ENCODE measurements at regions of chr10 and their contacts with region 1.

Region 1: DNA sequence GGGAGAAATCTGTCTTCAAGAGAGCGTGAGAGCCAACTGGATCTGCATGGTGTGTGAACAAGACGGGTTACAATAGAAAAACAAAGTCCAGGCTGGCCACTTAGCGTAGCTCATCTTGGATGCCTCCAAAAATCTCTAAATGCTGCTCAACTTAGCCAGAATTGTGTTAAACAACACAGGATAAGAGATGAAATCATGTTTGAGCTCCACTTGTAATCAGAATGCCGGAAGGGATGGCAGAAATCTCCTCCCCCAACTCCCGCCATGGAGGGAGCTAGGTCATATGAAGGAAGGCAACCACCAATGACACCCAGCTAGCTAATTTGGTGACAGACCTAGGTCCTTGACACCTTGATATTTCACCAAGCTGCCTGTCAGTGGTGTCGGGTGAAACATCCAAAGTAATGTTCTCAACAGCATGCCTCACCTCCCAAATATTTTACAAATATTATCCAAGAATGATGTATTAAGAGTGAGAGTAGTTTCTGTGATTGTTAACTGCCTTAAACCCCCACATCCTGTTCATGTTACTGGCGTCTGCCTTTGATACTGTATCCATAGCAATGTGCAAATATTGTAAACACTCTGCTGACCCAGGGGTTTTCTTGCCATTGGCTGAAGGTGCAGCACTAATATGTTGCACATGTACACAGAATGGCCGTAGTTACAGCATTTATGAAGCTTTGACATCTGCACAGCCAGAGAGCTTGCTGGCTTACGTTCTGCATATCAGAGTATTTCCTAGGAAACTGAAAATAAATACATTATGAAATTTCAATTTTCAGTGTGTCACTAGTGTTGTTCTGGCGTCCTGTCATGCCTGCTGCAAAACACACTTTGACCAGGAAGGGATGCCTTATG is 25.8 kb downstream of the TMEM254 start:
- DNase-seq: peak; percentile 62
- ATAC-seq: peak; percentile 55
- H3K4me3 ChIP-seq: no peak overlapping the region
- H3K27ac ChIP-seq: no peak overlapping the region
- H3K4me1 ChIP-seq: peaks cover 23% of the 10 kb centered on the region
- H3K27me3 ChIP-seq: no peaks in the 10 kb centered on the region
- CTCF ChIP-seq: no peak

Region 2: DNA sequence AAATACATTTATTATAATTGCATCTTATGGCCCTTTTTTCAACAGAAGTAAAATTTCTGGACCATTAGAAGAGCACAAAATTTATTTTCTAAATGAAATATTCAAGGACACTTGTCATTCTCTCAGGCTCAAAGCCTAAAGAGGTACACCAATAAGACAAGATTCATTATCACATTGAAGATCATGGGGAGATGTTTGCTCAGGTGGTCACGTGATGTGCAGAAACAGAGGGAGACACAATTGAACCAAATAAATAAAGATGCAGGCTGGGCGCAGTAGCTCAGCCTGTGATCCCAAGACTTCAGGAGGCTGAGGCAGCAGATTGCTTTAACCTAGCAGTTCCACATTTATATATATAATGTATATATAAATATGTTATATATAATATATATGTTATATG is 79.0 kb before region 1 on chr10:
- CTCF ChIA-PET with region 1: no interaction called
- POLR2A ChIA-PET with region 1: interaction called, 18 read pairs
- intact Hi-C with region 1: no loop called
- DNase-seq: no peak
- ATAC-seq: no peak
- H3K4me3 ChIP-seq: no peak overlapping the region
- H3K27ac ChIP-seq: no peak overlapping the region
- H3K4me1 ChIP-seq: no peaks in the 10 kb centered on the region
- H3K27me3 ChIP-seq: no peaks in the 10 kb centered on the region
- CTCF ChIP-seq: no peak

Region 3: GRCh38 chr10:80064120-80064886 is 40.0 kb before region 1 on chr10:
- CTCF ChIA-PET with region 1: no interaction called
- POLR2A ChIA-PET with region 1: interaction called, 11 read pairs
- intact Hi-C with region 1: no loop called
- DNase-seq: no peak
- ATAC-seq: no peak
- H3K4me3 ChIP-seq: no peak overlapping the region
- H3K27ac ChIP-seq: no peak overlapping the region
- H3K4me1 ChIP-seq: no peaks in the 10 kb centered on the region
- H3K27me3 ChIP-seq: no peaks in the 10 kb centered on the region
- CTCF ChIP-seq: no peak

Region 4: DNA sequence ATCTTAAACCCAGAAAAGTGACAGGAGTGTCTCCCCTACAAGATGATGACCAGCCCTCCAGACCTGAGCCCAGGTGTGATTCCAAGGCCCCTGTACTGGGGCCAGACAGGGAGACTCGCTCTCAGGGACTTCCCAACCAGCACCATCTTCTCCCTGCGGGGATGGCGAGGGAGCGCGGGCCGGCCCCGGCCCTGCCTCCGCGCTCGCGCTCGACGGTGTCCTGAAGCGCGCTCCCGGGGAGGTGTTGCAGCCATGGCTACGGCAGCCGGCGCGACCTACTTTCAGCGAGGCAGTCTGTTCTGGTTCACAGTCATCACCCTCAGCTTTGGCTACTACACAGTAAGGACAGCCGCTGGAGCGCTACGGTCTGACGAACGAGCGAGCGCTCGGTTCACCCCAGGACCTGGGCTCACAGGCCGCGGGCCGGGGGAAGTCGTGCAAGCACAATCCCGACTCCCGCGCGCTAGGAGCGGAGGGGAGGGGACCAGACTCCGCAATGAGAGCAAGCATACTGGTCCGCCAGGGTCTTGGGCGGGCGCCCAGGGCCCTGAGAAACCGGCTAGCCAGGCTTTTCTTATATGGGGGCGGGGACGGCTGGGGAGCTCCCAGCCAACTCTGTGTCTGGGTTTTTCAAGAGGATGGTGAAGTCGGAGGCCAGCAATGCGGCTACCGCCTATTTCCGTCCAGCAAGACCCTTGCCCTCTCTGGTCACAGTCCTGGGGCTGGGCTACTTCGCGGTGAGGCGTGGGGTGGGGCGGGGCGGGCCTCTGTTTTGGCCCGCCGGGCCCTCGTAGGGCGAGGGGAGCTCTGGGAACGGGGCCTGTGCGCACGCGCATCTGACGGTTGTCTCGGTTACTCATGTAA is 25.6 kb before region 1 on chr10 and contains the start of gene TMEM254:
- CTCF ChIA-PET with region 1: no interaction called
- POLR2A ChIA-PET with region 1: no interaction called
- intact Hi-C with region 1: no loop called
- DNase-seq: peak; percentile 100
- ATAC-seq: peak; percentile 85
- H3K4me3 ChIP-seq: peak within 1 kb of the TSS; percentile 67
- H3K27ac ChIP-seq: peak within 1 kb of the TSS; percentile 72
- H3K4me1 ChIP-seq: peaks cover 39% of the 10 kb centered on the region
- H3K27me3 ChIP-seq: no peaks in the 10 kb centered on the region
- CTCF ChIP-seq: no peak
- total RNA-seq, gene TMEM254: 53.7 and 68.3 TPM in 2 replicates

Region 5: GRCh38 chr10:80118674-80119073 is 14.4 kb after region 1 on chr10:
- CTCF ChIA-PET with region 1: interaction called, 5 read pairs
- POLR2A ChIA-PET with region 1: no interaction called
- intact Hi-C with region 1: loop called (anchors 2 kb)
- DNase-seq: no peak
- ATAC-seq: no peak
- H3K4me3 ChIP-seq: no peak overlapping the region
- H3K27ac ChIP-seq: no peak overlapping the region
- H3K4me1 ChIP-seq: peaks cover 8% of the 10 kb centered on the region; the same call in 1 of the 2 replicates
- H3K27me3 ChIP-seq: no peaks in the 10 kb centered on the region
- CTCF ChIP-seq: no peak